Heart right ventricle (tissue), 16 donors: ENCODE measurements at regions of chr2 and their contacts with region 1.

Region 1: DNA sequence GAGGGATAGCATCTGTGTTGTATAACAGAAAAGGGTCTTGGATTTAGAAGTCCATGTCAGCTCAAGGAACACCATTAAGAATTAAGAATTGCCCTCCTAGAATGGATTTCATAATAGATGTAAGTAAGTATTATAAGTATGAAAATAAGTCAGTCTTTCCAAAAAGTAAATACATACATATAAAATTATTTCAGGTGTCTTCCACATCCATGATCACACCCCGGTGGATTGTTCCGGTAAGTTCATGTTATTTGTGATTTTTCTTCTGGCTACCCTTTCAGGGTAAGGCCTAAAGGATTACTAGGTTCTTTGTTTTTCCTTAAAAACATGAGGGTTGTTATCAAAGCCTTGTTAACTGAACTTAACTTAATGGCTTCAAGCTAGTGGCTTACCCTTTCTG is 55.9 kb downstream of the TMEM185B start:
- DNase-seq: no peak
- ATAC-seq: no peak
- H3K4me3 ChIP-seq: no peak overlapping the region
- H3K27ac ChIP-seq: no peak overlapping the region
- H3K4me1 ChIP-seq: no peaks in the 10 kb centered on the region
- H3K27me3 ChIP-seq: no peaks in the 10 kb centered on the region
- CTCF ChIP-seq: no peak

Region 2: DNA sequence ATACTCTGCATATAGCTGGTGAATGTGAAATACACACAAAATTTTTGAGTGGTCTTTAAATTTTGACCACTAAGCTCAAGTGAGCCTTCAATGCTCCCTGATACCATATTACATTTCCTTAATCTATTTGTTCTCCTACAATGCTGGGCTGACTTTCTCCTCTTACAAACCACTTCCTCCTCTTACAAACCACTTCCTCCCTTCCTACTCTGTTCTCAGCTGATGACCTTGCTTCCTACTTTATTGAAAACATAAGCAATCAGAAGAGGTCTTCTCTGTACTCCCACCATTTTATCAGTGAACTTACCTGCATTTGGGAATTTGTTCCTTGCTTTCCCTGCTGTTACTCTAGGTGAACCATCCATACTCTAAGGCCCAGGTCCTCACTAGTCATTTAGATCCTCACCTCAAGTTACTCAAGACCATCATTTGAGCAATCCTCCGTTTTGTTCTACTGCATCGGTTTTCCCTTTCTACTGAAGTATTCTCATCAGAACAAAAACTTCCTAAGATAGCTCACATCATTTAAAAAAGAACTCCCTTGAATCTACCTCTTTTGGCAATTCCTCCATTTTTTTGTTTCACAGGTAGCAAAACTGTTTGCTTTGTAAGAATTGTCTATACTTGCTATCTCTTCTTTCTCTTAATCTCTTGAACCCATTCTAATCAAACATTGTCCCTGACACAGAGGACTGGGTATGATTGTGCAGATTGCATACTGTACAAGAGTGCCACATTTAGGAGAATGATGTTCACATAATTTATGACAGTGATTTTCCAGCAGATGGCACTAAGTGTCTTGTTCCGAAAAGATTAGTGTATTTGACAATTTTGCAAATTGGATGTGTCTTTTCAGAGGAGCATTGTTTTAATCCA is 57.8 kb before region 1 on chr2:
- intact Hi-C with region 1: loop called in 3 of 10 experiments (anchors 5 kb)
- DNase-seq: peak in 1 of 2 donors; percentile 6
- ATAC-seq: peak in 7 of 8 donors; percentile 15 to 64 (median 51)
- H3K4me3 ChIP-seq: no peak overlapping the region
- H3K27ac ChIP-seq: peak overlapping the region in 1 of 10 donors; percentile 46
- H3K4me1 ChIP-seq: peaks cover 0 to 37% (median 21%) of the 10 kb centered on the region in 9 donors
- H3K27me3 ChIP-seq: peaks cover 0 to 4% (median 0%) of the 10 kb centered on the region in 7 donors
- CTCF ChIP-seq: peak in 8 of 9 donors; percentile 23 to 65 (median 52)